CD4-positive, alpha-beta T cell (primary cell): ENCODE measurements at regions of chr9 and their contacts with region 1.

Region 1: GRCh38 chr9:96317335-96317980 is 15.5 kb upstream of the HSD17B3 start:
- DNase-seq: peak in 13 of 14 experiments; percentile 4 to 72 (median 46)
- ATAC-seq: peak; percentile 58
- H3K4me3 ChIP-seq: no peak overlapping the region
- H3K4me3 Mint-ChIP-seq: no peak overlapping the region
- H3K27ac ChIP-seq: no peak overlapping the region
- H3K27ac Mint-ChIP-seq: no peak overlapping the region
- H3K4me1 ChIP-seq: no peaks in the 10 kb centered on the region
- H3K4me1 Mint-ChIP-seq: no peaks in the 10 kb centered on the region
- H3K27me3 ChIP-seq: no peaks in the 10 kb centered on the region
- H3K27me3 Mint-ChIP-seq: peaks cover 4% of the 10 kb centered on the region
- CTCF ChIP-seq: peak; percentile 84

Region 2: GRCh38 chr9:95268681-95269080 is 1048.8 kb before region 1 on chr9:
- CTCF ChIA-PET with region 1: no interaction called
- POLR2A ChIA-PET with region 1: no interaction called
- intact Hi-C with region 1: loop called in 1 of 2 experiments (anchors 10 kb)
- DNase-seq: no peak
- ATAC-seq: no peak
- H3K4me3 ChIP-seq: no peak overlapping the region
- H3K4me3 Mint-ChIP-seq: no peak overlapping the region
- H3K27ac ChIP-seq: no peak overlapping the region
- H3K27ac Mint-ChIP-seq: no peak overlapping the region
- H3K4me1 ChIP-seq: peaks cover 2% of the 10 kb centered on the region
- H3K4me1 Mint-ChIP-seq: peaks cover 28% of the 10 kb centered on the region
- H3K27me3 ChIP-seq: no peaks in the 10 kb centered on the region
- H3K27me3 Mint-ChIP-seq: no peaks in the 10 kb centered on the region
- CTCF ChIP-seq: peak; percentile 17

Region 3: DNA sequence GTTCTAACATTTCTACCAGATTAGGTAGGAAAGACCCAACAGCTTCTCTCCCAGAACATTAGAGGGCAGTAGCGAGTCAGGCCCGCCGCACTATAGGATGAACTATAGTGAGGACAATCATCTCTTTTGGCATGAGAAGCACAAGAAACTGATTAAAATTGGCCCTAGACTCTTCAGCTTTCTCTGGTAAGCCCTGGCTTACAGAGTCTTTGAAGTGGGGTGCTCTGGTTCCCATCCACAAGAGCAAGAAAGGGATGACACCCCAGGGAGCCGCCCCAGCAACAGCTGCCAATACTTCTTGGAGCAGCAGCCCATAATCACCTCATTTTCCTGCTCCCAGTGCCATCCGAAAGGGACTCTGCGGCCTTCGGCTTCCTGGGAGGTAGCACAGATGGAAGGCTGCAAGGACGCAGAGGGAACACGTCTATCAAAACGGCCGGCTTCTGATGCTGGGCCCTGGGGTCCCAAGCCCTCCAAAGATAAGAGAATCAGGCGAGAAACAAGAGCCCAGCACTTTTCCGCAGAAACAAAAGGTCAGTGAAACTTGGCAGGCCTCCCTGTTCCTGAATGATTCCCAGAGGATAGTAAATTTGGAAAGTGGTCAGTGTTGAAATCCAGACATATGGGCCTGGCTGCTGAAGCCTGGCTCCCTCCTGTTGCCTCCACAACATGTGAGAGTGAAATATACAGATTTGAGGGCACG is 84.8 kb before region 1 on chr9:
- CTCF ChIA-PET with region 1: interaction called, 3 read pairs
- POLR2A ChIA-PET with region 1: no interaction called
- intact Hi-C with region 1: loop called (anchors 1 to 2 kb)
- DNase-seq: peak in 7 of 14 experiments; percentile 5 to 52 (median 24)
- ATAC-seq: no peak
- H3K4me3 ChIP-seq: no peak overlapping the region
- H3K4me3 Mint-ChIP-seq: no peak overlapping the region
- H3K27ac ChIP-seq: no peak overlapping the region
- H3K27ac Mint-ChIP-seq: no peak overlapping the region
- H3K4me1 ChIP-seq: peaks cover 3% of the 10 kb centered on the region
- H3K4me1 Mint-ChIP-seq: no peaks in the 10 kb centered on the region
- H3K27me3 ChIP-seq: peaks cover 2 to 5% of the 10 kb centered on the region in 2 experiments
- H3K27me3 Mint-ChIP-seq: peaks cover 56% of the 10 kb centered on the region
- CTCF ChIP-seq: peak; percentile 76

Region 4: GRCh38 chr9:96256800-96257199 is 60.7 kb before region 1 on chr9:
- CTCF ChIA-PET with region 1: no interaction called
- POLR2A ChIA-PET with region 1: no interaction called
- intact Hi-C with region 1: no loop called
- DNase-seq: no peak
- ATAC-seq: no peak
- H3K4me3 ChIP-seq: no peak overlapping the region
- H3K4me3 Mint-ChIP-seq: no peak overlapping the region
- H3K27ac ChIP-seq: no peak overlapping the region
- H3K27ac Mint-ChIP-seq: no peak overlapping the region
- H3K4me1 ChIP-seq: peaks cover 3% of the 10 kb centered on the region
- H3K4me1 Mint-ChIP-seq: no peaks in the 10 kb centered on the region
- H3K27me3 ChIP-seq: peaks cover 7 to 10% of the 10 kb centered on the region in 2 experiments
- H3K27me3 Mint-ChIP-seq: peaks cover 21% of the 10 kb centered on the region
- CTCF ChIP-seq: no peak

Region 5: DNA sequence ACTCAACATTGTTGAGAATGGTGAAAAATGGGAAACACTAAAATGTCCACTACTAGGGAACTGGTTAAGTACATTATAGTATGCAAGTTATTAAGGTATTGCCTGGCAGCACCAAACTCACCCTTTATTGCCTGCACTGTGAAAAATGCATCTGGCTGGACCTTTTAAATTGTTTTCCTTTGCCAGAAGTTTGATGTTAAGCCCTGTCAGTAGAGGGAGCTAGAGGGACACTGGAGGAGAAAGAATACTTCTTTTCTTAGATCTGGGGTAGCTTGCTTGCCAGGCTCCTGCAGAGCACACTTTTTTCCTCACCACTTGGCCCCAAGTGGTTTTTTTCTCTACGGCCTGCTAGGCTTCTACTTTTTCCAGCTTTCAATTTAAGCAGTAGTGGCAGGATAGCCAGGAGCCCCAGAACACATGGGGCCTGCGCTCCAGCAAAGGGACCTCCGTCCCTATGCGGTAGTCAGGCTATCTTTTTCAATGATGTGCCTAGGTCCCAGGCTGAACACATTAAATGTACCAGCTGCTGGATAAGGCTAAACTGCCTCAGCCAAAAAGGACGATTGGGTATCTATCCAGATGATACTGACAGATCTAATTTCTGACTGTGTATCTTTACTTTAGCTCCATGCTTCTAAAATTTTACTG is 124.5 kb after region 1 on chr9:
- CTCF ChIA-PET with region 1: no interaction called
- POLR2A ChIA-PET with region 1: no interaction called
- intact Hi-C with region 1: no loop called
- DNase-seq: peak in 3 of 14 experiments; percentile 26 to 60 (median 49)
- ATAC-seq: no peak
- H3K4me3 ChIP-seq: no peak overlapping the region
- H3K4me3 Mint-ChIP-seq: no peak overlapping the region
- H3K27ac ChIP-seq: no peak overlapping the region
- H3K27ac Mint-ChIP-seq: no peak overlapping the region
- H3K4me1 ChIP-seq: no peaks in the 10 kb centered on the region
- H3K4me1 Mint-ChIP-seq: no peaks in the 10 kb centered on the region
- H3K27me3 ChIP-seq: no peaks in the 10 kb centered on the region
- H3K27me3 Mint-ChIP-seq: no peaks in the 10 kb centered on the region
- CTCF ChIP-seq: peak; percentile 11